ENCODE measurements at regions of chr3 and their contacts with region 1.

Region 1: DNA sequence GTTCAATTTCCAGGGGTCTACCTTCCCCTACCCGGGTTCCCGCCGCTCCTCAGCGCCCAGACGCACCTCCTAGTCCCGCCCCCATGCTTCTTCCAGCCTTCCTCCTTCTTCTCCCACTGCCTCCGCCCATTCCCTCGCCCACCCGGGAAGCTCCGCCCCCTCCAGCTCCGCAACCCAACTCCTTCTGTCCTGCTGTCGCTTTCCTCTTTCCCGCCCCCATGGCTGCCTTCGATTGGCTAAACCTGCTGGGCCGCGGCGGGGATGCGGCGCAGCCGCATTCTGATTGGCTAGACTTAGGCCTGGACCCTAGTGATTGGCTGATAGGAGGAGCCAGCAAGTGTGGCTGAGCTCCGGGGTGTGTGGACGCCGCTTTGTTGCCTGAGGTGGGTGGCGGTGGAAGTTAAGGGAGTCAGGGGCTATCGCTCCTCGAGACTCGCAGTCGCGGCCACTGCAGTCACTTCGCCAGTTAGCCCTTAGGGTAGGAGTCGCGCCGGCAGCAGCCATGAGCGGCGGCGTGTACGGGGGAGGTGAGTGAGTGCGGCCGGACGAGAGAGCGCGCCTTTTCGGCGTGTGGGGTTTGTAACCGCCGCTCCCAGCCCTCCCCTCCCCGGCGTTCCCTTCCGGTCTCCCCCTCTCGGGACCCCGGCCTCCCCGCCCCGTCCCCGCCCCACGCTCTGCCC is at the start of gene ACTL6A:
- DNase-seq: peak; percentile 100
- ATAC-seq: peak; percentile 98 to 99 (median 99)
- H3K4me3 ChIP-seq: peak within 1 kb of the TSS; percentile 73 to 97 (median 90)
- H3K27ac ChIP-seq: peak within 1 kb of the TSS; percentile 72 to 94 (median 88)
- H3K4me1 ChIP-seq: peaks cover 0 to 24% (median 12%) of the 10 kb centered on the region in 12 donors
- H3K27me3 ChIP-seq: no peaks in the 10 kb centered on the region
- CTCF ChIP-seq: no peak
- POLR2A ChIP-seq: peak in 1 of 2 donors; percentile 55
- total RNA-seq, gene ACTL6A: 14.1 to 29.8 (median 19.8) TPM

Region 2: GRCh38 chr3:179147873-179148615 is 414.7 kb before region 1 on chr3 and contains the start of gene PIK3CA:
- intact Hi-C with region 1: loop called in 2 of 10 experiments (anchors 5 kb)
- DNase-seq: peak; percentile 94 to 97 (median 96)
- ATAC-seq: peak; percentile 97 to 99 (median 98)
- H3K4me3 ChIP-seq: peak within 1 kb of the TSS; percentile 83 to 97 (median 88)
- H3K27ac ChIP-seq: peak within 1 kb of the TSS; percentile 94 to 99 (median 98)
- H3K4me1 ChIP-seq: peaks cover 0 to 41% (median 27%) of the 10 kb centered on the region in 12 donors
- H3K27me3 ChIP-seq: no peaks in the 10 kb centered on the region
- CTCF ChIP-seq: no peak
- POLR2A ChIP-seq: peak in 1 of 2 donors; percentile 77
- total RNA-seq, gene PIK3CA: 13.9 to 28.0 (median 21.4) TPM

Region 3: GRCh38 chr3:179347345-179348194 is 215.2 kb before region 1 on chr3 and contains the start of gene MFN1:
- intact Hi-C with region 1: loop called in 4 of 10 experiments (anchors 2 to 10 kb)
- DNase-seq: peak; percentile 95 to 97 (median 96)
- ATAC-seq: peak; percentile 97 to 100 (median 99)
- H3K4me3 ChIP-seq: peak within 1 kb of the TSS; percentile 67 to 93 (median 82)
- H3K27ac ChIP-seq: peak within 1 kb of the TSS; percentile 43 to 94 (median 88)
- H3K4me1 ChIP-seq: peaks cover 0 to 24% (median 8%) of the 10 kb centered on the region in 12 donors
- H3K27me3 ChIP-seq: no peaks in the 10 kb centered on the region
- CTCF ChIP-seq: no peak
- POLR2A ChIP-seq: peak in 1 of 2 donors; percentile 86
- total RNA-seq, gene MFN1: 28.5 to 78.0 (median 59.0) TPM

Region 4: GRCh38 chr3:179446501-179446900 is 116.2 kb before region 1 on chr3:
- intact Hi-C with region 1: loop called in 6 of 10 experiments (anchors 1 to 5 kb)
- DNase-seq: no peak
- ATAC-seq: no peak
- H3K4me3 ChIP-seq: no peak overlapping the region
- H3K27ac ChIP-seq: peak overlapping the region in 2 of 12 donors; percentile 10 to 13
- H3K4me1 ChIP-seq: peaks cover 4 to 47% (median 25%) of the 10 kb centered on the region in 12 donors
- H3K27me3 ChIP-seq: no peaks in the 10 kb centered on the region
- CTCF ChIP-seq: peak in 9 of 12 donors; percentile 12 to 52 (median 38)
- POLR2A ChIP-seq: no peak

Region 5: GRCh38 chr3:179604321-179605078 is 41.8 kb after region 1 on chr3 and contains the starts of genes MRPL47 and NDUFB5:
- intact Hi-C with region 1: loop called in 1 of 10 experiments (anchors 2 kb)
- DNase-seq: peak; percentile 95 to 96 (median 95)
- ATAC-seq: peak; percentile 99 to 100 (median 100)
- H3K4me3 ChIP-seq: peak within 1 kb of the TSS; percentile 66 to 94 (median 80)
- H3K27ac ChIP-seq: peak within 1 kb of the TSS; percentile 87 to 98 (median 95)
- H3K4me1 ChIP-seq: peaks cover 4 to 53% (median 32%) of the 10 kb centered on the region in 12 donors
- H3K27me3 ChIP-seq: no peaks in the 10 kb centered on the region
- CTCF ChIP-seq: peak in 1 of 12 donors; percentile 7
- POLR2A ChIP-seq: peak; percentile 63 to 73
- total RNA-seq, gene MRPL47: 37.7 to 53.7 (median 51.9) TPM
- total RNA-seq, gene NDUFB5: 201 to 383 (median 337) TPM

Region 6: GRCh38 chr3:179671747-179672223 is 109.1 kb after region 1 on chr3:
- intact Hi-C with region 1: no loop called
- DNase-seq: peak in 1 of 5 donors; percentile 16
- ATAC-seq: peak; percentile 41 to 78 (median 44)
- H3K4me3 ChIP-seq: peak overlapping the region in 4 of 12 donors; percentile 7 to 30 (median 8)
- H3K27ac ChIP-seq: peak overlapping the region in 6 of 12 donors; percentile 10 to 43 (median 26)
- H3K4me1 ChIP-seq: peaks cover 0 to 71% (median 17%) of the 10 kb centered on the region in 12 donors
- H3K27me3 ChIP-seq: no peaks in the 10 kb centered on the region
- CTCF ChIP-seq: no peak
- POLR2A ChIP-seq: no peak